ENCODE measurements at regions of chr11 and their contacts with region 1.

Region 1: GRCh38 chr11:128342511-128343134 is 244.7 kb downstream of the ETS1 start:
- DNase-seq: peak in 5 of 9 donors; percentile 46 to 77 (median 63)
- ATAC-seq: peak; percentile 54
- H3K4me3 ChIP-seq: peak overlapping the region; percentile 57
- H3K4me3 Mint-ChIP-seq: peak overlapping the region; percentile 74 to 90 (median 84)
- H3K27ac ChIP-seq: peak overlapping the region; percentile 93
- H3K27ac Mint-ChIP-seq: peak overlapping the region; percentile 97 to 99 (median 99)
- H3K4me1 ChIP-seq: peaks cover 50 to 64% of the 10 kb centered on the region in 2 donors
- H3K4me1 Mint-ChIP-seq: peaks cover 52 to 99% (median 94%) of the 10 kb centered on the region in 7 donors
- H3K27me3 ChIP-seq: no peaks in the 10 kb centered on the region
- H3K27me3 Mint-ChIP-seq: no peaks in the 10 kb centered on the region

Region 2: GRCh38 chr11:128328955-128329551 is 13.6 kb before region 1 on chr11:
- CTCF ChIA-PET with region 1: interaction called, 3 read pairs
- POLR2A ChIA-PET with region 1: interaction called, 11 read pairs
- intact Hi-C with region 1: loop called (anchors 1 kb)
- DNase-seq: peak in 7 of 9 donors; percentile 67 to 79 (median 72)
- ATAC-seq: peak; percentile 47
- H3K4me3 ChIP-seq: peak overlapping the region; percentile 22
- H3K4me3 Mint-ChIP-seq: peak overlapping the region; percentile 57 to 86 (median 76)
- H3K27ac ChIP-seq: peak overlapping the region; percentile 82
- H3K27ac Mint-ChIP-seq: peak overlapping the region; percentile 93 to 99 (median 96)
- H3K4me1 ChIP-seq: peaks cover 69 to 76% of the 10 kb centered on the region in 2 donors
- H3K4me1 Mint-ChIP-seq: peaks cover 56 to 92% (median 80%) of the 10 kb centered on the region in 7 donors
- H3K27me3 ChIP-seq: no peaks in the 10 kb centered on the region
- H3K27me3 Mint-ChIP-seq: no peaks in the 10 kb centered on the region

Region 3: GRCh38 chr11:128365044-128365443 is 22.4 kb after region 1 on chr11:
- CTCF ChIA-PET with region 1: no interaction called
- POLR2A ChIA-PET with region 1: interaction called, 6 read pairs
- intact Hi-C with region 1: loop called in 1 of 2 experiments (anchors 1 kb)
- DNase-seq: peak in 5 of 9 donors; percentile 17 to 48 (median 45)
- ATAC-seq: no peak
- H3K4me3 ChIP-seq: no peak overlapping the region
- H3K4me3 Mint-ChIP-seq: no peak overlapping the region
- H3K27ac ChIP-seq: no peak overlapping the region
- H3K27ac Mint-ChIP-seq: peak overlapping the region in 2 of 9 donors; percentile 40 to 85
- H3K4me1 ChIP-seq: no peaks in the 10 kb centered on the region
- H3K4me1 Mint-ChIP-seq: peaks cover 8 to 47% (median 37%) of the 10 kb centered on the region in 7 donors
- H3K27me3 ChIP-seq: no peaks in the 10 kb centered on the region
- H3K27me3 Mint-ChIP-seq: peaks cover 0 to 5% (median 0%) of the 10 kb centered on the region in 5 donors

Region 4: GRCh38 chr11:128412847-128413791 is 70.5 kb after region 1 on chr11:
- CTCF ChIA-PET with region 1: no interaction called
- POLR2A ChIA-PET with region 1: interaction called, 4 read pairs
- intact Hi-C with region 1: loop called in 1 of 2 experiments (anchors 5 kb)
- DNase-seq: no peak
- ATAC-seq: no peak
- H3K4me3 ChIP-seq: no peak overlapping the region
- H3K4me3 Mint-ChIP-seq: peak overlapping the region in 6 of 10 donors; percentile 12 to 69 (median 58)
- H3K27ac ChIP-seq: no peak overlapping the region
- H3K27ac Mint-ChIP-seq: peak overlapping the region; percentile 30 to 95 (median 82)
- H3K4me1 ChIP-seq: peaks cover 0 to 37% of the 10 kb centered on the region in 2 donors
- H3K4me1 Mint-ChIP-seq: peaks cover 23 to 85% (median 77%) of the 10 kb centered on the region in 7 donors
- H3K27me3 ChIP-seq: no peaks in the 10 kb centered on the region
- H3K27me3 Mint-ChIP-seq: no peaks in the 10 kb centered on the region

Measured in naive thymus-derived CD4-positive, alpha-beta T cell (primary cell).